Naive thymus-derived CD4-positive, alpha-beta T cell (primary cell): ENCODE measurements at regions of chr15 and their contacts with region 1.

Region 1: DNA sequence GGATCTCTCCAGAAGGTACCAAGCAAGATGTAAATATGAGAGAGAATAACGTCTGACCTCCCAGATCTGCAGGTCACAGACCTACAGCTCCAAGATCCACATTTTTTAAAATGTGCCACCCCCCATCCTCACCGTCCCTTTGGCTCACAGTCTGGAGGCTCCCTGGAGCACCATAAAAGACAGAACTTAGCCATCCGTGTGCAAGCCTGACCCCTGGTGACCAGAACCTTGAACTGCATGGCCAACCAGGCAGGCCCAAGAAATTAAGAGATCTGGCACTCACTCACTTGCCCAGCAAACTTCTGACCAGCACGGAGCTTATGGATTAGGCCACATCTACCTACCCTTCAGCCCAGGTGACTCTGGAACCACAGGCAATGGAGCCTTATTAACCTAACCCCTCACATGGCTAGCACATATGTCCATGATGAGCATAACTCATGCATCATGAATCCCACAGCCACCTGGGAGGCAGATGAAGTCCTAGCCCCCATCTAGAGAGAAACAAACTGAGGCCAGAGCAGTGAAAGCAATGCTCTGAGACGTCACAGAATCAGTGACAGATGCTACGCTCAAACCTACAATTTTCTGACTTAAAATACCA is 275.3 kb downstream of the UACA start:
- DNase-seq: peak; percentile 42 to 79 (median 62)
- ATAC-seq: peak; percentile 36
- H3K4me3 ChIP-seq: no peak overlapping the region
- H3K4me3 Mint-ChIP-seq: peak overlapping the region in 3 of 10 donors; percentile 13 to 36 (median 33)
- H3K27ac ChIP-seq: no peak overlapping the region
- H3K27ac Mint-ChIP-seq: peak overlapping the region in 2 of 9 donors; percentile 36 to 84
- H3K4me1 ChIP-seq: peaks cover 42 to 46% of the 10 kb centered on the region in 2 donors
- H3K4me1 Mint-ChIP-seq: peaks cover 45 to 86% (median 61%) of the 10 kb centered on the region in 7 donors
- H3K27me3 ChIP-seq: no peaks in the 10 kb centered on the region
- H3K27me3 Mint-ChIP-seq: peaks cover 0 to 37% (median 6%) of the 10 kb centered on the region in 5 donors

Region 2: DNA sequence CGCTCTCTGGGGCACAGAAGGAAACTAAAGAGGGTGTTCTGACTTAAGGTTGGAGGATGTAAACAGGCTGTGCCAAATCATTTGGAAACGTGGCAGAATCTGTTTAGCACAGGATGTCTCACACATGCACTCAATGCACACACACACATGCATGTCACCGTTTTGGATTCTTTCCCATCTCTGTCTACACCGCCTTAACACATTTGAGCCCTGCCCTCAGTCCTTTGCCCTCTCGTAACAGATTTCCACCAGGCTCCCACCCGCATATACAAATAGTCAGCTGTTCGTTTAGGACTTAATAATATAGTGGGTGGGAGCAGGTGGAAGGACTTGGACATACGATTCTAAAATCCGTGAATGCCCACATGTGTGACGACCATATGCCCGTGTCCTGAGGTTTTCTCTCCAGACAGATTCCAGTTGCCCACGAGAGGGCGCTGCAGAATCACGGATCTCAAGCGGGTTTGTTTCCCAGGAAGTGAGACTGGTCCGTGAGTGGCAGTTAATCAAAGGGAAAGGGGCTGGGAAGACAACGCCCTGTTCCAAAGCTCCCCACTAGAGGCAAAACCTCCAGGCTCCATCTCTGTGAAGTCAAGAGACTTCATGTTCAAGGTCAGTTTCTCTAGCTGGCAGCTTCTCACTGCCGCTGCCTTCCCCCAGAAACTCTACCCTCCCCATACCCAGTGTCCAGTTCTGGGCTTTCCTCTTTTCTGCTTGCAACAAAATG is 1429.1 kb before region 1 on chr15:
- CTCF ChIA-PET with region 1: no interaction called
- POLR2A ChIA-PET with region 1: no interaction called
- intact Hi-C with region 1: loop called in 1 of 2 experiments (anchors 2 kb)
- DNase-seq: peak; percentile 29 to 69 (median 59)
- ATAC-seq: peak; percentile 66
- H3K4me3 ChIP-seq: no peak overlapping the region
- H3K4me3 Mint-ChIP-seq: peak overlapping the region in 5 of 10 donors; percentile 21 to 61 (median 52)
- H3K27ac ChIP-seq: no peak overlapping the region
- H3K27ac Mint-ChIP-seq: peak overlapping the region in 4 of 9 donors; percentile 30 to 78 (median 58)
- H3K4me1 ChIP-seq: peaks cover 7 to 23% of the 10 kb centered on the region in 2 donors
- H3K4me1 Mint-ChIP-seq: peaks cover 5 to 38% (median 33%) of the 10 kb centered on the region in 7 donors
- H3K27me3 ChIP-seq: no peaks in the 10 kb centered on the region
- H3K27me3 Mint-ChIP-seq: peaks cover 0 to 18% (median 5%) of the 10 kb centered on the region in 5 donors

Region 3: GRCh38 chr15:69576035-69576526 is 912.0 kb before region 1 on chr15:
- CTCF ChIA-PET with region 1: interaction called, 3 read pairs
- POLR2A ChIA-PET with region 1: no interaction called
- intact Hi-C with region 1: loop called in 1 of 2 experiments (anchors 1 kb)
- DNase-seq: peak; percentile 38 to 69 (median 58)
- ATAC-seq: peak; percentile 87
- H3K4me3 ChIP-seq: no peak overlapping the region
- H3K4me3 Mint-ChIP-seq: no peak overlapping the region
- H3K27ac ChIP-seq: no peak overlapping the region
- H3K27ac Mint-ChIP-seq: peak overlapping the region in 3 of 9 donors; percentile 23 to 38 (median 24)
- H3K4me1 ChIP-seq: peaks cover 7 to 9% of the 10 kb centered on the region in 2 donors
- H3K4me1 Mint-ChIP-seq: peaks cover 14 to 44% (median 30%) of the 10 kb centered on the region in 7 donors
- H3K27me3 ChIP-seq: no peaks in the 10 kb centered on the region
- H3K27me3 Mint-ChIP-seq: peaks cover 0 to 11% (median 0%) of the 10 kb centered on the region in 5 donors

Region 4: GRCh38 chr15:70023064-70023768 is 464.9 kb before region 1 on chr15:
- CTCF ChIA-PET with region 1: no interaction called
- POLR2A ChIA-PET with region 1: no interaction called
- intact Hi-C with region 1: loop called in 1 of 2 experiments (anchors 5 kb)
- DNase-seq: peak in 8 of 9 donors; percentile 32 to 65 (median 46)
- ATAC-seq: peak; percentile 95
- H3K4me3 ChIP-seq: no peak overlapping the region
- H3K4me3 Mint-ChIP-seq: peak overlapping the region in 3 of 10 donors; percentile 42 to 80 (median 43)
- H3K27ac ChIP-seq: no peak overlapping the region
- H3K27ac Mint-ChIP-seq: peak overlapping the region in 6 of 9 donors; percentile 23 to 89 (median 56)
- H3K4me1 ChIP-seq: peaks cover 10 to 17% of the 10 kb centered on the region in 2 donors
- H3K4me1 Mint-ChIP-seq: peaks cover 9 to 26% (median 14%) of the 10 kb centered on the region in 7 donors
- H3K27me3 ChIP-seq: no peaks in the 10 kb centered on the region
- H3K27me3 Mint-ChIP-seq: peaks cover 0 to 26% (median 0%) of the 10 kb centered on the region in 5 donors

Region 5: GRCh38 chr15:70410216-70410977 is 77.7 kb before region 1 on chr15:
- CTCF ChIA-PET with region 1: no interaction called
- POLR2A ChIA-PET with region 1: no interaction called
- intact Hi-C with region 1: no loop called
- DNase-seq: no peak
- ATAC-seq: no peak
- H3K4me3 ChIP-seq: no peak overlapping the region
- H3K4me3 Mint-ChIP-seq: no peak overlapping the region
- H3K27ac ChIP-seq: no peak overlapping the region
- H3K27ac Mint-ChIP-seq: no peak overlapping the region
- H3K4me1 ChIP-seq: no peaks in the 10 kb centered on the region
- H3K4me1 Mint-ChIP-seq: peaks cover 0 to 4% (median 0%) of the 10 kb centered on the region in 7 donors
- H3K27me3 ChIP-seq: no peaks in the 10 kb centered on the region
- H3K27me3 Mint-ChIP-seq: peaks cover 0 to 39% (median 0%) of the 10 kb centered on the region in 5 donors

Region 6: GRCh38 chr15:70426105-70426821 is 61.8 kb before region 1 on chr15:
- CTCF ChIA-PET with region 1: no interaction called
- POLR2A ChIA-PET with region 1: no interaction called
- intact Hi-C with region 1: no loop called
- DNase-seq: no peak
- ATAC-seq: no peak
- H3K4me3 ChIP-seq: no peak overlapping the region
- H3K4me3 Mint-ChIP-seq: peak overlapping the region in 3 of 10 donors; percentile 37 to 74 (median 53)
- H3K27ac ChIP-seq: no peak overlapping the region
- H3K27ac Mint-ChIP-seq: peak overlapping the region in 5 of 9 donors; percentile 12 to 76 (median 43)
- H3K4me1 ChIP-seq: peaks cover 11 to 25% of the 10 kb centered on the region in 2 donors
- H3K4me1 Mint-ChIP-seq: peaks cover 17 to 35% (median 27%) of the 10 kb centered on the region in 7 donors
- H3K27me3 ChIP-seq: no peaks in the 10 kb centered on the region
- H3K27me3 Mint-ChIP-seq: peaks cover 0 to 20% (median 0%) of the 10 kb centered on the region in 5 donors

Region 7: GRCh38 chr15:70466895-70467529 is 21.1 kb before region 1 on chr15:
- CTCF ChIA-PET with region 1: interaction called, 23 read pairs
- POLR2A ChIA-PET with region 1: interaction called, 3 read pairs
- intact Hi-C with region 1: loop called in 1 of 2 experiments (anchors 2 kb)
- DNase-seq: peak in 6 of 9 donors; percentile 20 to 61 (median 54)
- ATAC-seq: peak; percentile 57
- H3K4me3 ChIP-seq: no peak overlapping the region
- H3K4me3 Mint-ChIP-seq: no peak overlapping the region
- H3K27ac ChIP-seq: no peak overlapping the region
- H3K27ac Mint-ChIP-seq: peak overlapping the region in 1 of 9 donors; percentile 3
- H3K4me1 ChIP-seq: no peaks in the 10 kb centered on the region
- H3K4me1 Mint-ChIP-seq: peaks cover 0 to 13% (median 6%) of the 10 kb centered on the region in 7 donors
- H3K27me3 ChIP-seq: no peaks in the 10 kb centered on the region
- H3K27me3 Mint-ChIP-seq: peaks cover 0 to 81% (median 4%) of the 10 kb centered on the region in 5 donors

Region 8: DNA sequence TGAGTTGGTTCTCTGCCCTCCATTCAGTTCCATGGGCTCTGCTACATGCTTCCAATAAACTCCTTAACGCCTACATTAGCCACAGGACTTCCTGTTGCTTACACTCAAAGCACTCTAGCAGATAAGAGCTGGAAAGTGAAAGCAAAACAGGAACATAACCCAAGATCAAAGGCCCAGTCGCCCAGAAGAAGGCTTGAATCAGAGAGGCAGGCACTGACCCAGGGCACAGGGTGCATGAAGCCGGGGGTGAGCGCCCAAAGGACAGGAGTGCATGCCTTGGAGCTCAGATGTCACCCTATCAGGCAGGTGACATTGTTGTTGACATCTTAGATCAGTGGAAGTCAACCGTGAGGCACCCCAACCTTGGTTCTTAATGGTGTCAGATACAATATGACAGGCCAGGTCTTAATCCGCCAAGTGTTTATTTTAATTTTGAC is 40.2 kb after region 1 on chr15:
- CTCF ChIA-PET with region 1: interaction called, 4 read pairs
- POLR2A ChIA-PET with region 1: interaction called, 9 read pairs
- intact Hi-C with region 1: loop called (anchors 1 kb)
- DNase-seq: peak in 8 of 9 donors; percentile 62 to 81 (median 77)
- ATAC-seq: peak; percentile 92
- H3K4me3 ChIP-seq: peak overlapping the region; percentile 55
- H3K4me3 Mint-ChIP-seq: peak overlapping the region; percentile 78 to 86 (median 82)
- H3K27ac ChIP-seq: peak overlapping the region; percentile 65
- H3K27ac Mint-ChIP-seq: peak overlapping the region; percentile 87 to 99 (median 95)
- H3K4me1 ChIP-seq: peaks cover 36 to 64% of the 10 kb centered on the region in 2 donors
- H3K4me1 Mint-ChIP-seq: peaks cover 42 to 99% (median 89%) of the 10 kb centered on the region in 7 donors
- H3K27me3 ChIP-seq: no peaks in the 10 kb centered on the region
- H3K27me3 Mint-ChIP-seq: peaks cover 0 to 4% (median 0%) of the 10 kb centered on the region in 5 donors

Region 9: GRCh38 chr15:70670680-70671079 is 182.6 kb after region 1 on chr15:
- CTCF ChIA-PET with region 1: no interaction called
- POLR2A ChIA-PET with region 1: no interaction called
- intact Hi-C with region 1: loop called in 1 of 2 experiments (anchors 5 kb)
- DNase-seq: peak in 4 of 9 donors; percentile 13 to 24 (median 20)
- ATAC-seq: no peak
- H3K4me3 ChIP-seq: no peak overlapping the region
- H3K4me3 Mint-ChIP-seq: no peak overlapping the region
- H3K27ac ChIP-seq: no peak overlapping the region
- H3K27ac Mint-ChIP-seq: no peak overlapping the region
- H3K4me1 ChIP-seq: peaks cover 12 to 19% of the 10 kb centered on the region in 2 donors
- H3K4me1 Mint-ChIP-seq: peaks cover 13 to 32% (median 24%) of the 10 kb centered on the region in 7 donors
- H3K27me3 ChIP-seq: no peaks in the 10 kb centered on the region
- H3K27me3 Mint-ChIP-seq: peaks cover 0 to 29% (median 4%) of the 10 kb centered on the region in 5 donors